HEK293 (cell line): ENCODE measurements at regions of chr6 and their contacts with region 1.

Region 1: DNA sequence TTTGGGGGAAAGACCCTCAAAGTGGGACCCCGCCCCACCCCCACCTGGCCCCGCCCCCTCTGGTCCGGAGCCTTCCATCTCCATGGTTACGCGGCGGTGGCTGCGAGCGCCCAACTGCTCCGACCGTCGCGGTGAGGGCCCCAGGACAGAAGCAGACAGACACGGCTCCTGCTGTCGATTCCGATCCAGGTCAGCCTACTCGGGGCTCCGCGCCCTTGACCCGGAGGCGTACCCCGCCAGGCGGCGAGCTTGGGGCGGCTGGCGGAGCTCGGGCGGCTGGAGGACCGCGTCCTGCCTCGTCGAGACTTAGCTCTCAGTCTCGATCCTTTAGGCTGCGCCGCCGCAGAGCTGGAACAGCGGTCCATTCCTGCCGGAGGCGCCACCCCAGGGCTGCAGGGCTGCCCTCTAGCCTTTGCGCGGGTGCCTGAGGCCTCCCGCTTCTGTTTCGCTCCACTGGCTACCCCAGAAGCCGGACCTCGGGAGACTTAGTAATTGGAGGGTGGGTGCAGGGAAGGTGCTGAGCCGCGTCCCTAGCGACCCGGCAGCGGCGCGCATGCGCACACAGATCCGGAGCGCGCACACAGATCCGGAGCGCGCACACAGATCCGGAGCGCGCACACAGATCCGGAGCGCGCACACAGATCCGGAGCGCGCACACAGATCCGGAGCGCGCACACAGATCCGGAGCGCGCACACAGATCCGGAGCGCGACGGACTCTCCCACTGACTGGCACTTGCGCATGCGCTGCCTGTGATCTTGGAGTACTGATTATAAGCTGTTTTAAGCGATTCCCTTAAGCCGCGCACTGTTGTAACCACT is at the start of gene CFAP206:
- H3K4me3 ChIP-seq: peak within 1 kb of the TSS; percentile 94
- H3K27ac ChIP-seq: peak within 1 kb of the TSS; percentile 58
- H3K4me1 ChIP-seq: 0 out of 2 replicates have a peak, but pooled peaks cover 3% of the 10 kb centered on the region
- CTCF ChIP-seq: peak; percentile 87

Region 2: GRCh38 chr6:87375320-87375719 is 32.8 kb before region 1 on chr6:
- CTCF ChIA-PET with region 1: no interaction called
- POLR2A ChIA-PET with region 1: no interaction called
- H3K4me3 ChIP-seq: no peak overlapping the region
- H3K27ac ChIP-seq: no peak overlapping the region
- H3K4me1 ChIP-seq: no peaks in the 10 kb centered on the region
- CTCF ChIP-seq: no peak

Region 3: DNA sequence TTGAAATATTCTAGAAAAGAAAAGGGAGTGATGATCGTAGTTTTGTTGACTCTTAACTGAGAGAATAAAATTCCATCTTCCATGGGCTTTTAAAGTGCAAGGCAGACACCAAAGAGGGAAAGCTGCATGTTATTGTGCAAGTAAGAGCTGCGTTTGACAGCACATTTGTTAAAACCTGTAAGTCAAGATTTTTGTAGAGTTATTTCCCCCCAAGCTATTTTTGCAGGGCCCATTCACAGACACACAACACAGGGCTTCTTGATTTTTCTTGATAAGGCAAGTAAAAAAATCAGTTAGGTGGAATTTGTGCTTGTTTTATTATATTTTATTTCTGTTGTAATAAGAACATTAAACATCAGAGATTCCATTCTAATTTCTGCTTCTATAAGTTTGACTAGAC is 13.5 kb after region 1 on chr6:
- CTCF ChIA-PET with region 1: no interaction called
- POLR2A ChIA-PET with region 1: no interaction called
- H3K4me3 ChIP-seq: no peak overlapping the region
- H3K27ac ChIP-seq: no peak overlapping the region
- H3K4me1 ChIP-seq: no peaks in the 10 kb centered on the region
- CTCF ChIP-seq: no peak

Region 4: DNA sequence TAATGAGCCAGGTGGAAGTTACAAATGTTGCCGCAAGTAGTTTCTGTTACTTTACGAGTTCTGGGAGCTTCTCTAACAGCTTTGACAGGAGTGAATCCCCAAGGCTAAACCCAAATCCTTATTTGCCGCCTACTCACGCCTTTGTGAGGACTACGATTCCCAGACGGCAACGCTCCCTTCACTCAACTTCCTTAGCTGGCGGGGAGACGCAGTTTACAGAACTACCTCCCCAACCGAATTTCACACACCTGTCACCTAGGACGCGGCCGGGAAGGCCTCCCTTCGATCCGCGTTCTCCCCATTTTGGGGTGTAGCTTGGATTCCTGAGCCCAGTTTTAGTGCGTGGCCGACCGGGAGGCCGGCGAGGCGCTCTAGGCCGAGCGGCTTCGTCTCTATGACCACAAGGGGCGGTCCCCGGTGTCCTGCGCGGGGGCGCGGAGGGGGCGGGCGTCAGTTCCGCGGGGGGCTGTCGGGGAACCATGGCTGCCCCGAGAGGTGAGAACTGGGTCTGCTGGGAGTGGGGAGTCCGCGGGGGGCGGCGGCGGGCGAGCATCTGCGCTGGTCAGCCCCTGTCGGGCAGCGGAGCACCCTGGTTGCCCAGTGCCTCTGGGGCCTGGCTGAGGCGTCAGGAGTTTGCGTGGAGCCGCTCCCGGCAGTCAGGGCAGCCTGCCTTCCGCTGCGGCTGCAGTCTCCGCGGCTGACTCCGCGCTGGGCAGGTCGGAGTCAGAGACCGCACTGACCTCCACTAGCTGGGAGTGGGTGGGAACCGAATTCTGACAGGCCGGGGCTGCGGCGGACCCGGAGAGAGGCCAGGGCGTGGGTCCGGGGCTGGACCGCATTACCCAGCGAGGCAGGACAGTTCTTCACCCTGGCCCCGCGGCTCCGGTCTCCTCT is 64.7 kb after region 1 on chr6 and contains the start of gene SLC35A1:
- CTCF ChIA-PET with region 1: no interaction called
- POLR2A ChIA-PET with region 1: interaction called, 11 read pairs
- H3K4me3 ChIP-seq: peak within 1 kb of the TSS; percentile 83
- H3K27ac ChIP-seq: peak within 1 kb of the TSS; percentile 73
- H3K4me1 ChIP-seq: no peaks in the 10 kb centered on the region
- CTCF ChIP-seq: 0 out of 2 replicates have a peak, but pooled peaks have one; percentile 63